ENCODE measurements at regions of chr6 and their contacts with region 1.

Region 1: GRCh38 chr6:115854866-115855665 is 205.6 kb downstream of the FRK start:
- DNase-seq: no peak
- H3K4me3 ChIP-seq: no peak overlapping the region
- H3K27ac ChIP-seq: no peak overlapping the region
- H3K4me1 ChIP-seq: no peaks in the 10 kb centered on the region
- H3K27me3 ChIP-seq: no peaks in the 10 kb centered on the region
- CTCF ChIP-seq: no peak
- POLR2A ChIP-seq: no peak

Region 2: DNA sequence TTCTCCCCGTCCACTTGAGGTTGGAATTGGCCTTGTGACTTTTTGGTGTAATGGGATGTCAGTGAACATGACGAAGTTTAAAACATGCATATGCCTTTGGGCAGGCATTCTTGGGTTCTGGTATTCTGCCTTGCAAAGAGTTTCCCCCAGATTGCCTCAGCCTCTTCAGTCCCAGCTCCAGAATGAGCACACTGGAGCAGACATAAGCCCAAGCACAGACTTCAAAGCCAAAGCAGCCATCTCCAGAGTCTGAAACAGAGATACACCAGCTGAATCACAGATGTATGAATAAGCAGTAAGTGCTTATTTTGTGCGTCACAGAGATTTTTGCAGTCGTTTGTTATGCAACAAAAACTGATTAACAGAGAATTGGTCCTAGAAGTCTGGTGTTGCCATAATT is 340.4 kb before region 1 on chr6:
- intact Hi-C with region 1: no loop called
- DNase-seq: no peak
- H3K4me3 ChIP-seq: no peak overlapping the region
- H3K27ac ChIP-seq: no peak overlapping the region
- H3K4me1 ChIP-seq: no peaks in the 10 kb centered on the region
- H3K27me3 ChIP-seq: no peaks in the 10 kb centered on the region
- CTCF ChIP-seq: no peak
- POLR2A ChIP-seq: no peak

Region 3: GRCh38 chr6:115865914-115866313 is 10.8 kb after region 1 on chr6:
- intact Hi-C with region 1: loop called (anchors 1 kb)
- DNase-seq: no peak
- H3K4me3 ChIP-seq: no peak overlapping the region
- H3K27ac ChIP-seq: no peak overlapping the region
- H3K4me1 ChIP-seq: no peaks in the 10 kb centered on the region
- H3K27me3 ChIP-seq: no peaks in the 10 kb centered on the region
- CTCF ChIP-seq: no peak
- POLR2A ChIP-seq: no peak

Measured in vagina (tissue), 2 donors.